ENCODE measurements at regions of chr20 and their contacts with region 1.

Region 1: DNA sequence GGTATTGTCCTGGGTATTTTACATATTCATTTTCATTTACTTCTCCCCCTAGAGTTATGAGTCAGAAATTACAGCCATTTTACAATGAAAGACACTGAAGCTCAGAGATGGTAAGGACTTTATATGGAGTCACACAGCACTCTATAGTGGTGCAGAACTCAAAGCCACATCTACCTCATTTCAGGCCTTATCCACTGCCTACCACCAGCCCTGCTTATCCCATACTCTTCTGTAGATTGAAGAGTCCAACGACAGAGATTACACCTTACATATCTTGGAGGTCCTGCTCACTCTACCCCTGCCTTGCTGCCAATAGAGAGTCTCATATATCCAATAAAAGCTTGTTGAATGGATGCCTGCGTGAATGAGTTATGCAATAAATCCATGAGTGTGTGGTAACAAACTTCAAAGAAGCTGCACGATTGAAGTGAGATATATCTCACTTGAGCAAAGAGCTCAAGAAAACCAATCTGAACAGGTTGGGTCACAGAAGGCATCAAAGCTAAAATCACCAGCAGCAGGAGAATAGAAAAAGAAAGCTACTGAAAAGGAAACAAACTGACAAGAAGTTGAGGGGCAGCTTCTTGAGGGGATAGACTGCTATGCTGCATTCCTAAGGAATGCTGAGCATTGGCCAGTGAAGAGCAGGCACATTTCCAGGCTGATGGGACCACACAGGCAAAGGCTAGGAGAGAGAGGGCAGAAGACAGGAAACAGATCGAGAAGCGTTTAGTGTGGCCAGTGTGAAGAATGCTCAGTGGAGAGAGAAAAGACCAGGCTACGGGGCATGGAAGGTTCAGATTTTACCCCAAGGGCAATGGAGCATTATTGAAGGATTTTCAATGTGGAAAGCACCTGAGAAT is 585.6 kb downstream of the DHX35 start:
- DNase-seq: no peak
- H3K4me3 ChIP-seq: no peak overlapping the region
- H3K27ac ChIP-seq: no peak overlapping the region
- H3K4me1 ChIP-seq: peaks cover 0 to under 1% (median 0%) of the 10 kb centered on the region in 4 experiments; a peak in 1 of 7 replicates
- H3K27me3 ChIP-seq: no peaks in the 10 kb centered on the region
- CTCF ChIP-seq: peak in 1 of 3 experiments; percentile 6; a peak in 1 of 4 replicates
- EP300 ChIP-seq: no peak
- POLR2A ChIP-seq: no peak
- RAD21 ChIP-seq: no peak

Region 2: GRCh38 chr20:39474879-39475278 is 72.9 kb before region 1 on chr20:
- CTCF ChIA-PET with region 1: no interaction called
- POLR2A ChIA-PET with region 1: no interaction called
- DNase-seq: no peak
- H3K4me3 ChIP-seq: no peak overlapping the region
- H3K27ac ChIP-seq: no peak overlapping the region
- H3K4me1 ChIP-seq: no peaks in the 10 kb centered on the region
- H3K27me3 ChIP-seq: no peaks in the 10 kb centered on the region
- CTCF ChIP-seq: no peak
- EP300 ChIP-seq: no peak
- POLR2A ChIP-seq: no peak
- RAD21 ChIP-seq: no peak

Region 3: DNA sequence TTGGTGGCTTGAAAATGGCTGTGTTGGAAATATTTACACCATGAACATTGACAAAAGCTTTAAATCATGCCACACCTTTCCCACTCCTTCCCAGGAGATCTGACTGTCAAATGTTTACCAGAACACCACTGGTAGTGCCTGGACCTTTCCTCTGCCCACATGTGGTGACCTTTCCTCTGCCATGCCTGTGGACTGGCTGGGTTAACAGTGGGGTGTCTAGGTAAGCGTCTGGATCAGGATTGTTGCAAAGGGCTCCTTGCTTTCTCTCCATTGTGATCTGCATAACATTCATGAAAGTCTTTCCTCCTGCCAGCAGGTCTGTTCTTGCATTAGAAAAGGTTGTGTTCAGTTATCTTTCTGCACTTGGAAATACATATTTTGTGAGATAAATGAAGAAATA is 12.9 kb before region 1 on chr20:
- CTCF ChIA-PET with region 1: interaction called, 10 read pairs
- POLR2A ChIA-PET with region 1: no interaction called
- DNase-seq: no peak
- H3K4me3 ChIP-seq: no peak overlapping the region
- H3K27ac ChIP-seq: no peak overlapping the region
- H3K4me1 ChIP-seq: peaks cover 0 to 11% (median 2%) of the 10 kb centered on the region in 4 experiments; a peak in 2 of 7 replicates
- H3K27me3 ChIP-seq: no peaks in the 10 kb centered on the region
- CTCF ChIP-seq: no peak
- EP300 ChIP-seq: no peak
- POLR2A ChIP-seq: no peak
- RAD21 ChIP-seq: no peak

Region 4: GRCh38 chr20:39835130-39835842 is 287.5 kb after region 1 on chr20:
- CTCF ChIA-PET with region 1: no interaction called
- POLR2A ChIA-PET with region 1: no interaction called
- DNase-seq: no peak
- H3K4me3 ChIP-seq: no peak overlapping the region
- H3K27ac ChIP-seq: no peak overlapping the region
- H3K4me1 ChIP-seq: no peaks in the 10 kb centered on the region
- H3K27me3 ChIP-seq: no peaks in the 10 kb centered on the region
- CTCF ChIP-seq: no peak
- EP300 ChIP-seq: no peak
- POLR2A ChIP-seq: no peak
- RAD21 ChIP-seq: no peak